ENCODE measurements at regions of chr1 and their contacts with region 1.

Region 1: DNA sequence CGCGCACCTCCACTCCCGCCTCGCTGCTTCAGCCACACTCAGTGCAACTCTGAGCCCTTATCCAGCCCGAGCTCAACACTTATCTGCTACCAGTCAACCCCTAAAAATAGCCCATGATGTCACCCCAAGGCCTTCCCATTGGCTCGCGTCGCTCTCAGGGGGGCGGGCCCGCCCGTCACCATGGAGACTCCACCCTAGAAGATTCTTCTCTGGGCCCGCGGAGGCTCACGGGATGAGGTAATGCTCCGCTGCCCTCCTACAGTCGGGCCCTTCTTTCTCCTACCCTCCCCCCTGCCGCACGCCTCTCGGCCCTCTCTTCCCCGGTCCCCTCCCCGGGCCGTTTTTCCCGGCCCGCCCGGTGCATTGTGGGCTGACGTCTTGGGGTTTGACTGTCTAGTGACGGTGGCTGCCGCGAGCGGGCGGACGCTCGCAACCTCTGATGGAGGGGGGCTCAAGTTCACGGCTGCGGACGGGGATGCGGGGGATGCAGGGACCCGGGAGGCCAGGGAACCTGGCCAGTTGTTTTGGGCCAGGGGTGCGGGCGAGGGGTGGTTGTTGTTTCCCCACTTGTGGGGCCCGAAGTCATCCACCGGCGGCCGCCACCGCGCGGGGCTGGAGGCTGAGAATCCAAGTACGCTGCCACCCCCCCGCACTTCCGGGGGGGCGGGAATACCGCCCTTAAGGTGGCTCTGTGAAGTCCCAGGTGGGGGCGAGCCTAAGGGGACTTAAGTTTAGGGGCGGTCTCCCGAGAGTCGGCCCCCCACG is at the start of gene JUN:
- DNase-seq: peak; percentile 100
- ATAC-seq: peak; percentile 94 to 95
- H3K4me3 ChIP-seq: peak within 1 kb of the TSS; percentile 74
- H3K27ac ChIP-seq: peak within 1 kb of the TSS; percentile 99
- H3K4me1 ChIP-seq: no peaks in the 10 kb centered on the region
- H3K27me3 ChIP-seq: no peaks in the 10 kb centered on the region
- total RNA-seq, gene JUN: 41.1 to 69.8 (median 50.7) TPM

Region 2: DNA sequence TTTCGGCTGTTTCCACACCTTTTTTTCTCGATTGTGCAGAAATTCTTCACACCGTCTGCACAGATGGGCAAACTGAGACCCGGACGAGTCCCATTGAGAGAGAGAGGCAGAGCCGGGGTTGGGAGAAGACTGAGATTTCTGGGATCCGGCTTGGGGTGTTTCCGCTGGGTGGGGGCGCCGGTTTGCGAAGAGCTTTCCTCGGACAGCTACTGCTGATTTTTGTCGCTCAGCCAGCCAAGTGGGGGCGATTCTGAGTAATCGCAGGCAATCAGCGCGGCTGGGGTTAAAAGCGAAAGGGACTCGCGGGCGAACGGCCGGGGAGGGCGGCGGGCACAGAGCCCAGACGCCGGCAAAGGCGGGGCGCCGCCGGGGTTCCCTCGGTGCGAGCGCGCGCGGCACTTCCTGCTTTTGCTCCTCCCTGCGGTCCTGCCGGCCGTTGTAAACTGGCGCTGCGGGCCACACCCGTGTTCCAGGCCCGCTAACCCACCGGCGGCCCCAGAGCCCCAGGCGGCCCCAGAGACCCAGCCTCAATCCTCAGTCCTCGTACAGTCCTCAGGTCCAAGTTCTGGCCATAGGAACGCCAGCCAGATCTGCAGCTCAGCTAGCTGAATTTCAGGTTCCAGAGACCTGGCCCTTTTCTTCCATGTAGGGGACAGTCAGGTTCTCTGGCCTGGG is 32.0 kb after region 1 on chr1:
- intact Hi-C with region 1: loop called in 1 of 4 experiments (anchors 2 kb)
- DNase-seq: peak; percentile 93 to 97 (median 97)
- ATAC-seq: peak; percentile 90 to 94
- H3K4me3 ChIP-seq: peak overlapping the region; percentile 77
- H3K27ac ChIP-seq: peak overlapping the region; percentile 97
- H3K4me1 ChIP-seq: peaks cover 4% of the 10 kb centered on the region
- H3K27me3 ChIP-seq: no peaks in the 10 kb centered on the region

Region 3: GRCh38 chr1:58896246-58897183 is 112.3 kb after region 1 on chr1:
- intact Hi-C with region 1: loop called in 2 of 4 experiments (anchors 5 to 10 kb)
- DNase-seq: peak; percentile 73 to 88 (median 82)
- ATAC-seq: peak; percentile 74 to 84
- H3K4me3 ChIP-seq: no peak overlapping the region
- H3K27ac ChIP-seq: peak overlapping the region; percentile 71
- H3K4me1 ChIP-seq: peaks cover 34% of the 10 kb centered on the region
- H3K27me3 ChIP-seq: no peaks in the 10 kb centered on the region

Region 4: DNA sequence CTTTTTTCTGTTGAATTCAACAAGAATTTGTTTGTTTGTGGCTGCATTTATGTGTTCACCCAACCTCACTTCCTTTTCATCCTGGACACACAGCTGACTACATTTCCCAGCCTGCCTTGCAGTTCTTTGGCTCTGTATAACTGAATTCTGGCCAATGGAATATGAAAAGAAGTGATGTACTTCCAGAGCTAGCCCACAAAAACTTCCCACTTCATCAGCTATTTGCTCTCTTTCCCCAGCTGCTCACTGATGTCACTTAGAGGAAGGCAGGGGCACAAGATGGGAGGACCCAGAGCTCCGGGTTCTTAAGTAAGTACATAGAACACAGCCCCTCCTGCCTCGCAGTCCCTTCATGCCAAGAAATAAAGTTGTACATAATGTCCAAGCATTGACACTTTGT is 277.7 kb after region 1 on chr1:
- intact Hi-C with region 1: loop called in 1 of 4 experiments (anchors 10 kb)
- DNase-seq: peak; percentile 70 to 86 (median 74)
- ATAC-seq: peak; percentile 86 to 93
- H3K4me3 ChIP-seq: peak overlapping the region; percentile 71
- H3K27ac ChIP-seq: peak overlapping the region; percentile 90
- H3K4me1 ChIP-seq: peaks cover 6% of the 10 kb centered on the region
- H3K27me3 ChIP-seq: no peaks in the 10 kb centered on the region

Region 5: GRCh38 chr1:59150577-59151391 is 366.6 kb after region 1 on chr1:
- intact Hi-C with region 1: loop called in 2 of 4 experiments (anchors 10 kb)
- DNase-seq: peak; percentile 84 to 86 (median 86)
- ATAC-seq: peak; percentile 94 to 96
- H3K4me3 ChIP-seq: peak overlapping the region; percentile 21
- H3K27ac ChIP-seq: peak overlapping the region; percentile 97
- H3K4me1 ChIP-seq: peaks cover 12% of the 10 kb centered on the region
- H3K27me3 ChIP-seq: no peaks in the 10 kb centered on the region

Region 6: GRCh38 chr1:59638231-59638711 is 854.1 kb after region 1 on chr1:
- intact Hi-C with region 1: no loop called
- DNase-seq: peak in 1 of 3 donors; percentile 63
- ATAC-seq: peak; percentile 62 to 77
- H3K4me3 ChIP-seq: no peak overlapping the region
- H3K27ac ChIP-seq: no peak overlapping the region
- H3K4me1 ChIP-seq: no peaks in the 10 kb centered on the region
- H3K27me3 ChIP-seq: no peaks in the 10 kb centered on the region

Region 7: GRCh38 chr1:59699227-59699847 is 915.2 kb after region 1 on chr1:
- intact Hi-C with region 1: loop called in 2 of 4 experiments (anchors 10 kb)
- DNase-seq: no peak
- ATAC-seq: peak in 1 of 2 donors; percentile 44
- H3K4me3 ChIP-seq: no peak overlapping the region
- H3K27ac ChIP-seq: no peak overlapping the region
- H3K4me1 ChIP-seq: peaks cover 11% of the 10 kb centered on the region
- H3K27me3 ChIP-seq: no peaks in the 10 kb centered on the region

Measured in right cardiac atrium (tissue), 5 donors.